ENCODE measurements at regions of chr9 and their contacts with region 1.

Region 1: GRCh38 chr9:98796364-98797101 is at the start of gene ANKS6:
- DNase-seq: peak; percentile 19 to 89
- H3K4me3 ChIP-seq: peak within 1 kb of the TSS; percentile 72
- H3K27ac ChIP-seq: peak within 1 kb of the TSS; percentile 67 to 70
- H3K4me1 ChIP-seq: peaks cover 0 to 10% of the 10 kb centered on the region in 2 donors
- H3K27me3 ChIP-seq: no peaks in the 10 kb centered on the region
- CTCF ChIP-seq: peak in 1 of 3 experiments; percentile 79
- total RNA-seq, gene ANKS6: 13.0 TPM

Region 2: GRCh38 chr9:97982683-97983588 is 813.6 kb before region 1 on chr9 and contains the start of gene ANP32B:
- intact Hi-C with region 1: loop called (anchors 10 kb)
- DNase-seq: peak; percentile 63 to 95
- H3K4me3 ChIP-seq: peak within 1 kb of the TSS; percentile 86 to 91
- H3K27ac ChIP-seq: peak within 1 kb of the TSS; percentile 97 to 99
- H3K4me1 ChIP-seq: peaks cover 7 to 17% of the 10 kb centered on the region in 2 donors
- H3K27me3 ChIP-seq: no peaks in the 10 kb centered on the region
- CTCF ChIP-seq: peak; percentile 65 to 98 (median 71)
- total RNA-seq, gene ANP32B: 13.9 TPM

Region 3: DNA sequence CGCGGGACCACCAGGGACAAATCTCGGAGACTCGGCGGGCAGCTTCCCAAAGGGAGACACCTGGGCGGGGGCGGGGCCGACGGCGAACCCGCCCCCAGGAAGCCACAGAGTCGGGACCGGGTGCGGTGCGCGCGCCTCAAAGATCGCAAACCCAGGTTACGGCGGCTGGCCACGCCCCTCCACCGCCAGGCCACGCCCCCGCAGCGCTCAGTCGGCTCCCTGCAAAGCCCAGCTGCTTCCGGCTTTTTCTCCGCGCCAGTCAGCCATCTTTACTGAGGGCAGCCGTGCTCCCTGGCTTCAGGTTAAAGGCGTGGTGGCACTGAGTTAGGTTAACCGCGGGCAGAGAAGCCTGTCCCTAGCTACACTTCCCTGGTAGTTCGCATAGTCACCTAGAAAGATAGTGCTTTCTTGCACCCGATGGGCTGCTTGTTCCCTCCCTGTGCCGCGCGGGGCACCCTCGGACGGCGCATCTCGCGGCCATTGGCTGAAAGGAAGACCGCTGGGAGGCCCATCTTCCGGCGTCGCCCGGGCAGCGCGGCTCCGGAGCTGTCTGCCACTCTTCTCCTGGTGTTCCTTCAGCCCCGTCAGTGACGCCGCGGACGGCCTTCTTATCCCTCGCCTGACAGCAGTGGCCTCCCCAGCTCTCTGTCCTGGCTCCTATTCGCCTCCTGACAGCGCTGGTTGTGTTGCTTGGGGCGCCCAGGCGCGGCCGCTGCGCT is 540.8 kb before region 1 on chr9 and contains the start of gene TBC1D2:
- intact Hi-C with region 1: loop called (anchors 5 kb)
- DNase-seq: peak; percentile 81 to 97
- H3K4me3 ChIP-seq: peak within 1 kb of the TSS; percentile 71 to 72
- H3K27ac ChIP-seq: peak within 1 kb of the TSS; percentile 91 to 95
- H3K4me1 ChIP-seq: peaks cover 0 to 15% of the 10 kb centered on the region in 2 donors
- H3K27me3 ChIP-seq: no peaks in the 10 kb centered on the region
- CTCF ChIP-seq: peak in 1 of 3 experiments; percentile 10
- total RNA-seq, gene TBC1D2: 32.5 TPM

Region 4: GRCh38 chr9:99368341-99369323 is 572.1 kb after region 1 on chr9:
- intact Hi-C with region 1: loop called (anchors 5 kb)
- DNase-seq: peak; percentile 51 to 88
- H3K4me3 ChIP-seq: peak overlapping the region; percentile 56 to 77
- H3K27ac ChIP-seq: peak overlapping the region; percentile 90 to 95
- H3K4me1 ChIP-seq: peaks cover 0 to 8% of the 10 kb centered on the region in 2 donors
- H3K27me3 ChIP-seq: no peaks in the 10 kb centered on the region
- CTCF ChIP-seq: no peak

Region 5: DNA sequence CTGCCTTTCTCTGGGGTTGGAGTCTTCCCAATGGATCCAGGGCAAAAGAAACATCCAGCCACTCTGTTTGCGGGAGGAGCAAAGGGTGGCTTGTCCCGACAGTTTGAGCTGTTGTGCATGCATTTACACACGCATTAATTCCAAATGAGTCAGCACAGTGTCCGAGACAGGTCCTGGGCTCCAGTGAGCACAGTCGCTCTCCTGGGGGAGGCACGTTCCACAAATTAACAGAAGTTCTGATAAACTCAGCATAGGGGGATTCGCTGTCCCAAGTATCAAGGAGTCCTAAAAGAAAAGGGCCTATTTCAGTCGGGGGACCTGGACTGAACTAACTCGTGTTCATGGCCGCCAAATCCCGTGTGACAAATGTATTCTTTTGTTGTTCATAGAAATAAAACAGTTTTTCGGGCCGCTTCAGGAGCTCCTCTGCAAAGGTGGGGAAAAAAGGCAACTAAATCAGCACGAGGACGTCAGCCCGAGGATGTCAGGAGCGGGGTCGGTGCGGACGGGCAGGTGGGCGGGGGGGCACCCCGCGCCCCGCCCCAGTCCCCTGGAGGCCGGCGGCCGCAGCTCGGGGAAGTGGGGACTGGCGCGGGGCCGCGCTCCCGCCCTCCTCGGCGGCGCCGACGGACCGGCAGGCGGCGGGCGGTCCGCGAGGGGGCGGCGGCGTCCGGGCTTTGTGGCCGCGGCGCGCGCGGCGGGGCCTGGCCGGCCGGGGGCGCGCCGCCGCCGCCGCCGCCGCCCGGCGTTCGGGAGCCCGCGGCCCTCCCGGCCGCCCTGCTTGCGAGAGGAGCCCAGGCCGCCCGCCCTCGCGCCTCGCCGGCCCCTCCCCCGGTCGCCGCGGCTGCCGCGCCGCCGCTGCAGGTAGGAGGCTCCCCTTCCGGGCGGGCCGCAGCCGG is 1630.2 kb after region 1 on chr9 and contains the start of gene MSANTD3:
- intact Hi-C with region 1: loop called (anchors 5 kb)
- DNase-seq: peak in 1 of 2 donors; percentile 78
- H3K4me3 ChIP-seq: peak within 1 kb of the TSS; percentile 91 to 99
- H3K27ac ChIP-seq: peak within 1 kb of the TSS; percentile 89 to 94
- H3K4me1 ChIP-seq: peaks cover 0 to 26% of the 10 kb centered on the region in 2 donors
- H3K27me3 ChIP-seq: no peaks in the 10 kb centered on the region
- CTCF ChIP-seq: peak in 1 of 3 experiments; percentile 60
- total RNA-seq, gene MSANTD3: 2.8 TPM

Measured in ascending aorta (tissue), 2 donors.